Heart left ventricle (tissue), 16 donors: ENCODE measurements at regions of chr2 and their contacts with region 1.

Region 1: DNA sequence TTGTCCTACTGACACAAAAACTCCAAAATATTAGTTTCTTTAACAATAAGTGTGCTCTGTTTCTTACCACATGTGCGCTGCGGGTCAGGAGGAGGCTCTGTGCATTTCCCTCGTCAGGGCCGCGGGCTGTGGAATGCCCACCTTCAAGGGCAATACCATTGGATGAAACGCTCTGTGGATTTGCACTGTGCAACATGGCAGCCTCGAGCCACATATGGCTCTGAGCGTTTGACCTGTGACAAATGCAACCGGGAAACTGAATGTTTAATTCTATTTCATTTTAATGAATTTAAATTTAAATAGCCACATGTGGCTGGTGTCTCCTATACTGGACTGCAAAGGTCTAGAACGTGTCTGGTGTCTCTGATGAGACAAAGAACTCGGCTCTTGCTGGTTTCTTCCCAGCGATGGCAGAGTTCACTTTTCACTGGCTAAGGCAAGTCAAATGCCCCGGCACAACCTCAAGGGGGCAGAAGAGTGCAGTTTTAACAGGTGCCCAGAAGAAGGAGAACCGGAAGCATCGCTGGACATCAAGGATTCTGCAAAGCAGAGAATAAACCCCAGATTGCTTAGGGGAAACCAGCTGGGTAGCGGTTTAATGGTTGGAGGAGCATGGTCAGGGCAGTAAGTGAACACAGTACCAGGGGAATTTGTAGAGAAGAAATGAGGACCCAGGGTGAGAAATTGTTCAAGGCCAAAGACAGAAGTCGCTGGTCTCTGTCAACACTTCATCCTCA is 37.0 kb upstream of the TMEM18 start:
- DNase-seq: peak in 2 of 5 donors; percentile 29 to 51
- ATAC-seq: peak in 3 of 4 donors; percentile 52 to 68 (median 57)
- H3K4me3 ChIP-seq: no peak overlapping the region
- H3K27ac ChIP-seq: no peak overlapping the region
- H3K4me1 ChIP-seq: no peaks in the 10 kb centered on the region
- H3K27me3 ChIP-seq: peaks cover 0 to 58% (median 13%) of the 10 kb centered on the region in 9 donors
- CTCF ChIP-seq: peak; percentile 53 to 70 (median 62)
- POLR2A ChIP-seq: no peak

Region 2: GRCh38 chr2:729369-729768 is 15.2 kb after region 1 on chr2:
- intact Hi-C with region 1: loop called in 1 of 10 experiments (anchors 2 kb)
- DNase-seq: no peak
- ATAC-seq: no peak
- H3K4me3 ChIP-seq: no peak overlapping the region
- H3K27ac ChIP-seq: no peak overlapping the region
- H3K4me1 ChIP-seq: no peaks in the 10 kb centered on the region
- H3K27me3 ChIP-seq: peaks cover 0 to 13% (median 4%) of the 10 kb centered on the region in 9 donors
- CTCF ChIP-seq: no peak
- POLR2A ChIP-seq: no peak